Esophagus muscularis mucosa (tissue), 4 donors: ENCODE measurements at regions of chr20 and their contacts with region 1.

Region 1: GRCh38 chr20:59848182-59848581 is 85.3 kb downstream of the SYCP2 start:
- DNase-seq: no peak
- H3K4me3 ChIP-seq: no peak overlapping the region
- H3K27ac ChIP-seq: no peak overlapping the region
- H3K4me1 ChIP-seq: no peaks in the 10 kb centered on the region
- H3K27me3 ChIP-seq: peaks cover 0 to 4% (median 0%) of the 10 kb centered on the region in 4 donors
- CTCF ChIP-seq: no peak
- EP300 ChIP-seq: no peak
- POLR2A ChIP-seq: no peak

Region 2: GRCh38 chr20:59422885-59423865 is 425.0 kb before region 1 on chr20:
- intact Hi-C with region 1: no loop called
- DNase-seq: no peak
- H3K4me3 ChIP-seq: no peak overlapping the region
- H3K27ac ChIP-seq: no peak overlapping the region
- H3K4me1 ChIP-seq: no peaks in the 10 kb centered on the region
- H3K27me3 ChIP-seq: peaks cover 0 to 6% (median 0%) of the 10 kb centered on the region in 4 donors
- CTCF ChIP-seq: no peak
- EP300 ChIP-seq: no peak
- POLR2A ChIP-seq: no peak

Region 3: DNA sequence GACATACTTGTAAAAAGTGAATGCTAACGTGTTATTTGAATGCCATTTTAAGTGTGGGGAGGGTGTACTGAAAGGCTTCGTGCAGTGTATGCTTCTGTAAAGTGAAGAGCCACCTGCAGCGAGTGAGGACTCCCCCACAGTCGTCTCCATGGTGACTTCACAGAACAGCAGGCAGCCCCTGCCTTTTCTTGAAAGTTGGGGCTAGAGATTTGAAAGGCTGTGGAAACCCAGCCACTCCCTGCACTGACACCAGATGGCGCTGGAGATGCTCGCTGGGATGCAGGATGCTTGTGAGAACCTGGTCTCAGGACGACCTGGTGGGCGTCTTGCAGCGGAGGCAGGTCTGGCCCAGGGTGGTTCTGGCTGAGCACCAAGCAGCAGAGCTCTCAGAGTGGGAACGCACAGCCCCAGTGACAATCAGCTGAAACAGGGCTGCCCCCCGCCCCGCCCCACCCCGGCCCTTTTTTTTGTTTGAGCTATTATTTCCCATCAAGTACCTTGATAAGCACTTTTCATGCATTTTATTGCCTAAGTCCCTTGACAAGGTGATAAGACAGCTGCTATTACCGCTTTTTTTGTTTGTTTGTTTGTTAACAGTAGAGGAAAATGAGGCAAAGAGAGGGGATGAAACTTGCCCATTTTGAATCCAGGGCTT is 65.1 kb before region 1 on chr20:
- intact Hi-C with region 1: loop called (anchors 5 kb)
- DNase-seq: peak; percentile 90
- H3K4me3 ChIP-seq: no peak overlapping the region
- H3K27ac ChIP-seq: no peak overlapping the region
- H3K4me1 ChIP-seq: no peaks in the 10 kb centered on the region
- H3K27me3 ChIP-seq: peaks cover 0 to 10% (median 0%) of the 10 kb centered on the region in 4 donors
- CTCF ChIP-seq: peak; percentile 54 to 83 (median 73)
- EP300 ChIP-seq: no peak
- POLR2A ChIP-seq: no peak